Sigmoid colon (tissue), 7 donors: ENCODE measurements at regions of chr20 and their contacts with region 1.

Region 1: DNA sequence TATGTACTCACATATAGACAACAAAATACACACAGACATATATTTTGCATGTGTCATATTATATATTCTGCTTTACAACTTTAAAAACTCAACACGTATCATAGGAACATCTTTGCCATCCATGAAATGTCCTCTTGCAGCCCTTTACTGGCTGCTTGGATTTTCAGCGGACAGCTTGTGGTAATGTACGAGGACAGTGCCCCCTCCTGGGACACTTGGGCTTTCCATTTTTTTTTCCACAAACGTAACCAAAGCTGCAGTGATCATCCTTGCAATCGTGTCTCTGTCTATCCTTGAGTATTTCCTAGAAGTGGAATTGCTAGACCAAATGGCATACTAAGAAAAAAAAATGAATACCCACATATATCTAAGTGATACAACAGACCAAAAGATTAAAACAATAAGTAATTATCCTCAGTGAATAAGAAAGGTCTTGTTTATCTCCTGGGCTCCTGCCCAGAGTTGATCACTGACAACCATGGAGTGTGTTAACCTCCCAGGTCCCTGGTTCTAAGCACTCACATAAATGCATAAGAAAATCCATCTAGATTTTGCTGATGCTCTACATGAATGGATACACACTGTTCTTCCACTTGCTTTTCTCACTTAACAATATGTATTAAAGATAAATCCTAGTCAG is 18.1 kb downstream of the BPI start:
- DNase-seq: peak; percentile 72
- H3K4me3 ChIP-seq: no peak overlapping the region
- H3K27ac ChIP-seq: no peak overlapping the region
- H3K4me1 ChIP-seq: no peaks in the 10 kb centered on the region
- H3K27me3 ChIP-seq: peaks cover 0 to 8% (median 0%) of the 10 kb centered on the region in 3 donors
- CTCF ChIP-seq: peak; percentile 12 to 52 (median 30)
- EP300 ChIP-seq: no peak
- POLR2A ChIP-seq: no peak

Region 2: DNA sequence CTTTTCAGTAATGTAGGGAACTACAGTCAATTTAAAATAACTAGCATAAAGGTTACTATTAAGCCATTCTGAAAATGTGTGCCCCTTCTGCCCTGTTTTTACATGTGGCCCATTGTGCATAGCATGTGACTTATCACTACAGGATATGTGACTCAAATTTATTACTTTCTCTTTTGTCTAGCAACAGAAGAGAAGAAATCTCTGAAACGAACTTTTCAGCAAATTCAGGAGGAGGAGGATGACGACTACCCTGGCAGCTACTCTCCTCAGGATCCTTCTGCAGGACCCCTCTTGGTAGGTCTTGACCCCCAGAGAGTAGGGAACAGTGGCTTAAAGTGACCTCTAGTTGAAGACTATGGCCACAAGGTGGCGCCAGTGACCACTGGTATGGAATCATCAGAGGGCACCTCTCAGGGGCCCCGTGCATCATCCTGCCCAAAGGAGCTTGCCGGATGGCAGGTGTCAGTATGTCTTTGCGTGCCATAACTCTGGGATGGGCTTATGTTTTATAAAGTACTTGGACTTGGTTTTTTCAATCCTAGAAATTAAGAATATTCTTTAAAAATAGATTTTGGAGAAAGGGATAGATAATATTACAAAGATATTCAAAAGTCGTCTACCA is 264.6 kb before region 1 on chr20:
- intact Hi-C with region 1: loop called (anchors 2 kb)
- DNase-seq: peak; percentile 89
- H3K4me3 ChIP-seq: no peak overlapping the region
- H3K27ac ChIP-seq: no peak overlapping the region
- H3K4me1 ChIP-seq: no peaks in the 10 kb centered on the region
- H3K27me3 ChIP-seq: no peaks in the 10 kb centered on the region
- CTCF ChIP-seq: peak; percentile 66 to 94 (median 87)
- EP300 ChIP-seq: no peak
- POLR2A ChIP-seq: no peak

Region 3: DNA sequence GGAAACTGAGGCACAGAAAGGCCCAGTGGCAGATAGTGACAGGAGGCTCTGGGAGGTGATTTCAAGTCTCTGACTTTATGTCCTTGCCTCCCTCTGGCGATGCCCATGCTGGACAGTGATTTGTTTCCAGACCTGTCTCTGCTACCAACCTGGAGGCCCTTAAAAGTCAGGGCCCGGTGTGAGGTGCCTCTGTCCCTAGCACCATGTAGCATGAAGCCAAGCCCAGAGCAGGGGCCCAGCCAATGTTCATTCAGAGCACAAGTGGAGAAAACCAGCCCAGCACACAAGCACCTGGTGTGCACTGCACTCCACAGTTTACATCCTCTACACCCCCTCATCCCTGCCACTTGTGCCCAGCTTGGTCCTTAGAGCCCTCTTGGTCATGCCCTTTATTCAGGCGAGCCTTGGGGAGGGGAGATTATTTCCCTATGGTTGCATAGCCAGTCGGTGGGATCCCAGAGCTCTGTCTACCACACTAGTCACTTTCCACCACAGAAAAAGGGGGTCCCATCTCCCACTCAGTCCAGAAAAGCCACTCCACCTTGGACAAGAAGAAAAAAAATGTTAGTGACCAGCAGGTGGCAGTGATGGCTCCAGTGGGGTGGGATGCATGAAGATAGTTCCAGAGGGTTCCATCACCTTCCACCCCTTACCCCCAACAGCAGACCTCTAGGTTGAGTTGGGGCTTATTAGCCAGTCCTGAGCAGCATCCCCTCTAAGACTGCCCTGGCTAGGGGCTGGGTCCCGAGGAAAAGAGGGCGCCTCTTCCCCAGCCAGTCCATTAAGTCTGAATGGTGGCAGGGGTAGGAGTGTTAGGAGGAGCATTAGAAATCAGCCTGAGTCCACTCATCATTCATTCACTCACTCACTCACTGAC is 92.5 kb before region 1 on chr20:
- intact Hi-C with region 1: loop called (anchors 5 kb)
- DNase-seq: peak; percentile 57
- H3K4me3 ChIP-seq: no peak overlapping the region
- H3K27ac ChIP-seq: no peak overlapping the region
- H3K4me1 ChIP-seq: peaks cover 0 to 6% (median 0%) of the 10 kb centered on the region in 4 donors
- H3K27me3 ChIP-seq: no peaks in the 10 kb centered on the region
- CTCF ChIP-seq: peak in 2 of 4 experiments; percentile 23 to 37
- EP300 ChIP-seq: no peak
- POLR2A ChIP-seq: no peak

Region 4: DNA sequence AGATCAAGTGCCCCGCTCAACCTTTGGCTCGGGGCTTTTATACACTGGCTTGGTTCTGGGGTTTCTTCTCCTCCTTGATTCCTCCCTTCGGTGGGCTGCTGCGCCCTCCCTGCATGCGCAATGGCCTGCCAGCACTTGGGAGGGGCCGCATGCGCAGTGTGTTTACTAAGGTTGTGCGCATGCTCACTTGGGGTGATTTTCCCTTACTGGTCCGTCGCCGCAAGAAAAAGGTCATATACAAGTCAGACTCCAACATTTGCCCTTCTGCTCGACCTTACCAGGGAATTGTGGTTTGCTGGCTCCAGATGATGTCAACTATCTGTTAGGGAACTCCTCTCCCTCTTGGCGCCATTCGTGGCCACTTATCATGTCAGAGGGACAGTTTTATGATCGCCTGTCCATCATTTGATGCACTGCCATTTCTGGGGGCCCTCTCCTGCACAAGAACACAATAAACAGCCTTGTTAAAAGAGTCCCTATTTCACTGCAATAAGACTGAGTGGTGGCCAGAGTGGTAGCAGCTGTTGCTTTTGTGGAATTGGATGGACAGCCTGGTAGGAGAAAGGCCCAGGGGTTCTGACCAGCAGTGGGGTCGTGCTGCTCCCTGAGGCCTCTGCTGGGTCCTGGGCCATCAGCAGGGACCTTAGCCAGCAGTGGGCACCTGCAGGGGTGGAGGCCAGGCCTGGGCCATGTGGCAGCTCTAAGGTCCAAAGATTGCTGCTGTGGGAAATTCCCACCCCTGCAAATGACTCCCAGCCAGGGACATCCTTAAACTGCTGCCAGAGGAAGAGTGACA is 21.4 kb after region 1 on chr20:
- intact Hi-C with region 1: no loop called
- DNase-seq: peak; percentile 82
- H3K4me3 ChIP-seq: peak overlapping the region in 3 of 4 donors; percentile 25 to 37 (median 33)
- H3K27ac ChIP-seq: peak overlapping the region in 2 of 4 donors; percentile 34 to 46
- H3K4me1 ChIP-seq: peaks cover 0 to 13% (median 3%) of the 10 kb centered on the region in 4 donors
- H3K27me3 ChIP-seq: no peaks in the 10 kb centered on the region
- CTCF ChIP-seq: no peak
- EP300 ChIP-seq: no peak
- POLR2A ChIP-seq: no peak

Region 5: DNA sequence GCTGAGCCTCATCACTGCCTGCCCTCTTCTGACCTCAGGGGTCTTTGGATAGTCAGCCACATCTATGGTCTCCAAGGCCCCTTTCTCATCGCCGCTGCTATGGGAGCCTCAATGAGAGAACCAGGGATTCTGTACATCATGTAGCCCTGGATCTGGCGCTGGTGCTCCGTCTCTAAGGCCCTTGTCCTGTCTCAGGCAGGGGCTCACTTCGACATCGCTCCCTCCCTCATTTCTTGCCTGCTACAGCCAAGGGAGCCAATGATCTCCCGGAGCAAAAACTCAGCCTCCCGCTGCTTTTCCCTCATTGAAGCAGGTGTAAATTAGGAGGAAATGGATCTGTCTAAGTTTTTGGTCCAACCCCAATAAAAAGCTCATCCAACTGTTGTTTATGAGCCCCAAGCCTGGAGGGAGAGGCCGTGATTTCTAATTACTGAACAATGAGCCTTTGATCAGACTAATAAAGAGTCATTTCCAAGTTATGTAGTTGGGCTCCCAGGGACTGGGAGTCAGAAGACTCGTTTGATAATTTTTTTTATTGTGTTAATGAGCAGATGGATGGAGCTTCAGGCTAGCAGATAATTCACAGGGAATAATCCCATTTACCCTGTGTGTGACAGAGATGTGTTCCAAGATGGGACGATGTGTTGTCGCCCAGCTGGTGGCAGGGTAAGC is 55.1 kb after region 1 on chr20:
- intact Hi-C with region 1: no loop called
- DNase-seq: no peak
- H3K4me3 ChIP-seq: no peak overlapping the region
- H3K27ac ChIP-seq: no peak overlapping the region
- H3K4me1 ChIP-seq: no peaks in the 10 kb centered on the region
- H3K27me3 ChIP-seq: peaks cover 0 to 4% (median 0%) of the 10 kb centered on the region in 3 donors
- CTCF ChIP-seq: no peak
- EP300 ChIP-seq: no peak
- POLR2A ChIP-seq: no peak